Activated B cell treated with CpG ODN at 0.5 μM for 24 hours (primary cell): ENCODE measurements at regions of chr7 and their contacts with region 1.

Region 1: DNA sequence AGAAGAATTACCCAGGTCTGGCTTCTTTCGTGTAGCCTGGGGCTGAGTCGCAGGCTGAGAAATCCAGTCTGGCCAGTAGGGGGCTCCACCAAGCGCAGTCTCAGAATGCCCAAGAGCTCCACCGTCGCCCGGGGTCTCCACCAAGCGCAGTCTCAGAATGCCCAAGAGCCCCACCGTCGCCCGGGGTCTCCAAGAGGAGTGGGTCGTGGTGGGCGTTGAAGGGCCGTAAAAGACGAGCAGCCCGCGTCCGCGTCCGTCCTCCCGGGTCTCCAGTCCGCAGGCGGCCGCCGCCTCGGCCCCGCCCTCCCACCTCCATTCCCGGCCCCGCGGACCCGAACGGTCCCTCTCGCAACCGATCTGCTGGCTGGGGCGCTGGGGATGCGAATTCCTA is 895 bp upstream of the ZYX start:
- DNase-seq: peak; percentile 82
- ATAC-seq: peak; percentile 50
- H3K4me3 Mint-ChIP-seq: peak overlapping the region; percentile 86
- H3K27ac Mint-ChIP-seq: peak overlapping the region; percentile 85
- H3K4me1 Mint-ChIP-seq: peaks cover 32% of the 10 kb centered on the region
- H3K27me3 Mint-ChIP-seq: no peaks in the 10 kb centered on the region
- CTCF ChIP-seq: peak; percentile 73

Region 2: GRCh38 chr7:143013893-143014292 is 366.4 kb before region 1 on chr7:
- CTCF ChIA-PET with region 1: interaction called, 3 read pairs
- POLR2A ChIA-PET with region 1: no interaction called
- intact Hi-C with region 1: loop called (anchors 10 kb)
- DNase-seq: no peak
- ATAC-seq: no peak
- H3K4me3 Mint-ChIP-seq: peak overlapping the region; percentile 21
- H3K27ac Mint-ChIP-seq: peak overlapping the region; percentile 95
- H3K4me1 Mint-ChIP-seq: peaks cover 83% of the 10 kb centered on the region
- H3K27me3 Mint-ChIP-seq: no peaks in the 10 kb centered on the region
- CTCF ChIP-seq: no peak

Region 3: DNA sequence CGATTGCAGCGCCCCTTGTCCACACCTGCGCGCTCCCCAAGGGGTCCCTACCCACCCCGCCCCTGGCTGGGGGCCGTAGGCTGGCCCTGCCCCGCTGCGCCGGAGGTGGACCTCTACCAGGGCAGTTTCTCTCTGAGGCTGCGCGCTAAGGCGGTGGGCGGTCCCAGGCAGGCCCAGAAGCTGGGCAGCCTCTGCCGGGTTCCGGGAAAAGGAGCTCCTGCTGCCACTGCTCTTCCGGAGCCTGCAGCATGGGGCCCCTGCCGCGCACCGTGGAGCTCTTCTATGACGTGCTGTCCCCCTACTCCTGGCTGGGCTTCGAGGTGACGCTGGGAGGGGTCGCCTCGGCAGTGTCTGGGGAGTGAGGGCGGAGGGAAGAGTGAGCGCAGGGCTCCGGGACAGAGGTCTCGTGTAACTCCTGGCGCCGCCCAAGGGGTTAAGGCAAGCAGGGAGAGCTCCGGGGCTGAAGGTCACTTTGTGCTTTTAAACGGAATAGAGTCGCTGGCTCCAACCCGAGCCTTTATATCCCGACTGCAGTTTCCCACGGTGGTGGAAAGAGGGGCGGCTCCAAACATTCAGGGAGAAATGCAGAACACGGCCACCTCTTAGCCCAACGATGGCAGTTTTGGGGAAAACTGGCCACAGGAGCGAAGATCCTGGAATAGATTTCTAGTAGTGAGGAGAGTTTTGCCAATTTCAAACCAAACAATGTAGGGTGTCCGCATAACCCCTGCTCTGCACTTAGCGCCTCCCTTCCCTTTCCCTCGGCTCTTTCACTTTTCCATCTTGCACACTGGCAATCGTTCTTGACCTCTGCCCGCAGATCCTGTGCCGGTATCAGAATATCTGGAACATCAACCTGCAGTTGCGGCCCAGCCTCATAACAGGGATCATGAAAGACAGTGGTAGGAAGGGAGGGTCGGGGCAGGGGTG is 116.7 kb before region 1 on chr7 and contains the start of gene GSTK1:
- CTCF ChIA-PET with region 1: no interaction called
- POLR2A ChIA-PET with region 1: interaction called, 10 read pairs
- intact Hi-C with region 1: loop called (anchors 2 kb)
- DNase-seq: peak; percentile 68
- ATAC-seq: peak; percentile 97
- H3K4me3 Mint-ChIP-seq: peak within 1 kb of the TSS; percentile 95
- H3K27ac Mint-ChIP-seq: peak within 1 kb of the TSS; percentile 83
- H3K4me1 Mint-ChIP-seq: peaks cover 52% of the 10 kb centered on the region
- H3K27me3 Mint-ChIP-seq: no peaks in the 10 kb centered on the region
- CTCF ChIP-seq: no peak
- total RNA-seq, gene GSTK1: 144 and 150 TPM in 2 replicates

Region 4: DNA sequence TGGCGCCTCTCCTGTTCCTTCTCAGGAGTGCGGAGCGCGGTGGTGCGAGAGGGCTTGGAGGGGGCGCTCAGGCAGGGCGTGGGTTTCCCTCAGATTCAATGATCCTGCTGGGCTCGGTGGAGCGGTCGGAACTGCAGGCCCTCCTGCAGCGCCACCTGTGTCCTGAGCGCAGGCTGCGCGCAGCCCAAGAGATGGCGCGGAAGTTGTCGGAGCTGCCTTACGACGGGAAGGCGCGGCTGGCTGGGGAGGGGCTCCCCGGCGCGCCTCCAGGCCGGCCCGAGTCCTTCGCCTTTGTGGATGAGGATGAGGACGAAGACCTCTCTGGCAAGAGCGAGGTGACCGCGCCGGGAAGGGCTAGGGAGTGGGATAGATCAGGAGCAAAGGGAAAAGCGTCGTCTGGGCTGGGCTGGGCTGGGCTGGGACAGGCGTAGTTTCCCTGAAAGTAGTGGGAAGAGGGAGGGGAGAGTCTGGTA is 34.8 kb before region 1 on chr7:
- CTCF ChIA-PET with region 1: no interaction called
- POLR2A ChIA-PET with region 1: no interaction called
- intact Hi-C with region 1: loop called (anchors 5 kb)
- DNase-seq: no peak
- ATAC-seq: peak; percentile 91
- H3K4me3 Mint-ChIP-seq: peak overlapping the region; percentile 64
- H3K27ac Mint-ChIP-seq: no peak overlapping the region
- H3K4me1 Mint-ChIP-seq: peaks cover 6% of the 10 kb centered on the region
- H3K27me3 Mint-ChIP-seq: peaks cover 27% of the 10 kb centered on the region
- CTCF ChIP-seq: no peak

Region 5: DNA sequence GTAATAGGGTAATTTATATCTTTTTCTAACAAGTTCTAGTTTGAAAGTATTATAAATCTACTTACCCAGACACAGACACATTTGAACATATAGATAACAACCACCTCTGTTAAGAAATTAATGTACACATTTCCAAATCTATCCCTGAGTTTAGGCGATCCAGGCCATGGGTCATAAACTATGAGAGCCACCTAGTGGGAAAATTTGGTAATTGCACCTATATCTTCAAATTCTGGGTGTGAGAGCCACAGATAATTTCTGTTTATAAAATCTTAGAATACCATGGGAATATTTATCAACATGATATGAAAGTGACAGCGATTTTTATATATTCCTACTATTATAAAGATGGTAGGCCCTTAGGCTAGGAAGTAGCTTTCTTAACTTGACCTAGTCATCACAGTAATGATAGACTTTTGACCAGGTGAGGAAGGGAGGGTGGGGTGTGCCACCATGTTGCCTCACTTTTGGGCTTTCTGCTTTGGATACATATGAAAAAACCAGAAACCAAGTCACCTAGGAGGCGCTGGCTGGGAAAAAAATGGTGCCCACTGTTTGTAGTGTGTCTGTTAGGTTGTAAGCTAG is 36.4 kb after region 1 on chr7:
- CTCF ChIA-PET with region 1: interaction called, 14 read pairs
- POLR2A ChIA-PET with region 1: interaction called, 4 read pairs
- intact Hi-C with region 1: loop called (anchors 1 kb)
- DNase-seq: no peak
- ATAC-seq: no peak
- H3K4me3 Mint-ChIP-seq: no peak overlapping the region
- H3K27ac Mint-ChIP-seq: no peak overlapping the region
- H3K4me1 Mint-ChIP-seq: no peaks in the 10 kb centered on the region
- H3K27me3 Mint-ChIP-seq: peaks cover 37% of the 10 kb centered on the region
- CTCF ChIP-seq: peak; percentile 58

Region 6: DNA sequence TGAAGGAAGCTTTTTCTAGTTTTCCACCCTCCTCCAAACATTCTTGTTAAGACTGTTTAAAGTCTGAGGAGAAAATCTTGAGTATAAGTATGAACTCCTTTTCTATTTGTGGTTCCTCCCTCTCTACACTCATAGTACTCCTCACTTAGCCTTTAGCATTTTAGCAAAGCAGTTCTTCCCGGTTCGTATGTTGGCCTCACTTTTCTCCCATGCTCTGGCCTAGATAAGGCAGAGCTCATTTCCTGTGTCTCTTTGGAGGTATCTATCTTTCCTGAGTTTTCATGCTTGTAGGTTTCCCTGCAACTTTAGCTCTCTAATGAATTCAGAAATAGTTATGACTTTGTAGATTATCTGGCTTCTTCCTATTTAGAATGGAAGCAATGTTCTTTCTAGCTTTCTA is 568.5 kb after region 1 on chr7:
- CTCF ChIA-PET with region 1: no interaction called
- POLR2A ChIA-PET with region 1: no interaction called
- intact Hi-C with region 1: no loop called
- DNase-seq: no peak
- ATAC-seq: no peak
- H3K4me3 Mint-ChIP-seq: no peak overlapping the region
- H3K27ac Mint-ChIP-seq: no peak overlapping the region
- H3K4me1 Mint-ChIP-seq: no peaks in the 10 kb centered on the region
- H3K27me3 Mint-ChIP-seq: peaks cover 7% of the 10 kb centered on the region
- CTCF ChIP-seq: no peak